ENCODE measurements at regions of chr18 and their contacts with region 1.

Region 1: DNA sequence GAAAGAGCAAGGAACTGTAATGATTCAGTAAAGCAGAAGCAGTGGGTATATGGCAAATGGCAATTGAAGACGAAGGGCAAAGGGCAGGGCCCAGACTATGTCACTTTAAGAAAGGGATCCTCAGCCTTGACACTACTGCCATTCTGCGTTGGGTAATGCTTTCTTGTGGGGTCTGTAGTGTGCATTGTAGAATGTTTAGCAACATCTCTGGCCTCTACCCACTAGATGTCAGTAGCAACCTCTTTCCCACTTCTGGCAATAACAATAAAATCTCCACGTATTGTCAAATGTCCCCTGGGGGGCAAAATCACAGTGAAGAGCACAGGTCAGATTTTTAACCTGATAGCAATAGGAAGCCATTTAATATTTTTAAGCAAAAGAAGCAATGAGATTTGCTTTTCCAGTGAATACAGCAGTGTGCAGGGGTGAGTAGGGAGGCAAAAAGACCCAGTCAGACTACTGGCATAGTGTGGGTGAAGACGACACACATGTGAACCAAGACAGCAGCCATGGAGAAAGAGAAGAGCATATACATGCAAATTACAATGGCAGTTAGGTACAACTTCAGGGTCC is 209.5 kb downstream of the DYM start:
- DNase-seq: no peak
- H3K4me3 ChIP-seq: no peak overlapping the region
- H3K27ac ChIP-seq: no peak overlapping the region
- H3K27me3 ChIP-seq: no peaks in the 10 kb centered on the region
- CTCF ChIP-seq: peak; percentile 68

Region 2: GRCh38 chr18:49041435-49042245 is 209.3 kb before region 1 on chr18:
- CTCF ChIA-PET with region 1: no interaction called
- POLR2A ChIA-PET with region 1: no interaction called
- DNase-seq: peak; percentile 29
- H3K4me3 ChIP-seq: no peak overlapping the region
- H3K27ac ChIP-seq: no peak overlapping the region
- H3K27me3 ChIP-seq: no peaks in the 10 kb centered on the region
- CTCF ChIP-seq: peak; percentile 77

Region 3: GRCh38 chr18:49100226-49100968 is 150.5 kb before region 1 on chr18:
- CTCF ChIA-PET with region 1: no interaction called
- POLR2A ChIA-PET with region 1: no interaction called
- DNase-seq: no peak
- H3K4me3 ChIP-seq: no peak overlapping the region
- H3K27ac ChIP-seq: no peak overlapping the region
- H3K27me3 ChIP-seq: no peaks in the 10 kb centered on the region
- CTCF ChIP-seq: no peak

Region 4: GRCh38 chr18:49416511-49416910 is 165.6 kb after region 1 on chr18:
- CTCF ChIA-PET with region 1: interaction called, 15 read pairs
- POLR2A ChIA-PET with region 1: no interaction called
- DNase-seq: no peak
- H3K4me3 ChIP-seq: no peak overlapping the region
- H3K27ac ChIP-seq: no peak overlapping the region
- H3K27me3 ChIP-seq: no peaks in the 10 kb centered on the region
- CTCF ChIP-seq: no peak